ENCODE measurements at regions of chr9 and their contacts with region 1.

Region 1: GRCh38 chr9:37425301-37425752 is 2.8 kb downstream of the GRHPR start:
- DNase-seq: peak; percentile 64 to 91 (median 88)
- H3K4me3 ChIP-seq: peak overlapping the region in 1 of 4 donors; percentile 31
- H3K27ac ChIP-seq: peak overlapping the region; percentile 58 to 96 (median 91)
- H3K4me1 ChIP-seq: peaks cover 35 to 44% of the 10 kb centered on the region in 2 donors
- H3K27me3 ChIP-seq: no peaks in the 10 kb centered on the region
- CTCF ChIP-seq: no peak
- POLR2A ChIP-seq: peak in 1 of 2 donors; percentile 61

Region 2: GRCh38 chr9:37371565-37372464 is 53.5 kb before region 1 on chr9:
- intact Hi-C with region 1: no loop called
- DNase-seq: no peak
- H3K4me3 ChIP-seq: no peak overlapping the region
- H3K27ac ChIP-seq: no peak overlapping the region
- H3K4me1 ChIP-seq: no peaks in the 10 kb centered on the region
- H3K27me3 ChIP-seq: no peaks in the 10 kb centered on the region
- CTCF ChIP-seq: no peak
- POLR2A ChIP-seq: no peak

Region 3: GRCh38 chr9:37464426-37465248 is 39.3 kb after region 1 on chr9:
- intact Hi-C with region 1: loop called in 1 of 2 experiments (anchors 5 kb)
- DNase-seq: peak; percentile 76 to 90 (median 84)
- H3K4me3 ChIP-seq: peak overlapping the region; percentile 21 to 96 (median 86)
- H3K27ac ChIP-seq: peak overlapping the region; percentile 93 to 100 (median 99)
- H3K4me1 ChIP-seq: peaks cover 11 to 26% of the 10 kb centered on the region in 2 donors
- H3K27me3 ChIP-seq: no peaks in the 10 kb centered on the region
- CTCF ChIP-seq: peak in 1 of 6 experiments; percentile 14
- POLR2A ChIP-seq: peak; percentile 16 to 71

Measured in adrenal gland (tissue), 19 donors.